OCI-LY7 (cell line): ENCODE measurements at regions of chr3 and their contacts with region 1.

Region 1: DNA sequence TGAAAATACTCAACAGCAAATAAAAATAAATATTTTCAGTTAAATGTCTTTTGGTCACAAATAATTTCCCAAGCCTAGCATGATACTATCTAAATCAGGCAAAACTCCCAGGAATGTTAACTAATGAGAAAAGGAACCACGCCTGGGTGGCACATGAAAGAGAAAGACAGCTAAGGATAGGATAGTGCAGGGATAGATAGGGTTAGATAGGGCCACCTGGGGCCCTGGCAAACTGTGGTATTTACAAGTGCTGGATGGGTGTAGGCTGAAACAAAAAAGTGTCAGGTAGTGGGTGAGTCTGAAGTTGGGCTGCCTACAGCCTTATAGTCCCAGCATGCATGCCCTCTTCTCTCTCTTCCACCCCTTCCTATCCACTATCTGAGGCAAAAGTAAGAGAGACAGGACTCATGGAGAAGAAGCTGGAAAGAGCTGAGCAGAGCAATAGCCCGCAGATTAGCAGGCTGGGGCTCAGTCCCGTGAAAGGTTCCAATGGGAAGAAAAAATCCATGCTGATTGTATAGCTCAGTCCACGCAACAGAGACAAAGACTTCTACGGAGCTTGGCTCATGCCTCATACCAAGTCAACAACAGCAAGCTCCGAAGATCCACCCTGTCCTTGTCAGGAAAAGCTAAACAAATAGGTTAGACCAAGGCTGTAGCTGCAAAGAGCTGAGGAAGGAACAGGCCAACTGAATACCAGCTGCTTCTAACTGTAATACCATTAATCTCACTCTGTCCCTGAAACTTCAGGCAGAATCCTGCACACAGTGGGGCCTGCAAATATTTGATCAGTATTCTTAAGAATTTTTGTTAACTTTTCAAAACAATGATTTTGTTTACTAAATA is 342.1 kb upstream of the ATP11B start:
- DNase-seq: no peak
- H3K4me3 ChIP-seq: no peak overlapping the region
- H3K27ac ChIP-seq: no peak overlapping the region
- H3K4me1 ChIP-seq: peaks cover 9% of the 10 kb centered on the region
- CTCF ChIP-seq: no peak

Region 2: GRCh38 chr3:182436547-182436946 is 14.6 kb before region 1 on chr3:
- CTCF ChIA-PET with region 1: interaction called, 3 read pairs
- POLR2A ChIA-PET with region 1: interaction called, 12 read pairs
- intact Hi-C with region 1: no loop called
- DNase-seq: no peak
- H3K4me3 ChIP-seq: no peak overlapping the region
- H3K27ac ChIP-seq: no peak overlapping the region
- H3K4me1 ChIP-seq: no peaks in the 10 kb centered on the region
- CTCF ChIP-seq: no peak